A673 (cell line): ENCODE measurements at regions of chr11 and their contacts with region 1.

Region 1: DNA sequence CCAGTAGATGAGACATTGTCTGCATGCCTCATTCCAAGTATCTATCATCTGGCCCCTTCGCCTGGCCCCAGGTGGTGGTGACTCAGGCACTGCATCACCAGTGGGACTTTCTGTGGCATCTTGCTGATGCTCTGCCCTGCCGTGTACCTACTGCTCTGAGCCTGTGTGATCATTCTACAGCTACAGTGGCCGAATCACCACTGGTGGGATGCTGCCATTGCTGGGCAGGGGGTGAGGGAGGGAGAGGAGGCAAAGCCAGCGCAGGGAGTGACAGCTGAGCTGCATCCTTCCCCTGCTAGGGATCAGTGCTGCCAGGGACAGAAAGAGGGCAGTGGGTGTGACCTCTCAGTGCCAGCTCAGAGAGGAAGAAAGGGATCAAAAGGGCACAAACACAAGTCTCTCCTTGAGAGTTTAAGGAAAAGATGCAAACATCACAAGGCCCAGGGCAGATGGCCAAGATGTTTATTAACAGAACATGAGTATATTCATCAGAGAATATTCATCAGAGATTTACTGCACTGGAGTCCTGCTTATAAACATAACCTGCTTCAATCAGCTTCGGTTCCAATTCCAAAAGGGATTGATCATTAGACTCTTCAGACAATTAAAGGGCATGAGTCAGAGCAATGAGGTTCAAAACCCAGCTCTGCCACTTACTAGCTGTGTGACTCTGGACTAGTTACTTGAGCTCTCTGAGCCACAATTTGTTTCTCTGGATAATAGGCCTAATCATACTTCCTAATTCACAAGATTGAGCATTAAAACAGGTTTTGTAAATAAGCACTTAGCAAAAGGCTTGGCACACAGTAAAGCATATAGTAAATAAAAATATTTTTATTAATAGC is 109.8 kb downstream of the NAT10 start:
- DNase-seq: peak; percentile 46
- H3K4me3 ChIP-seq: no peak overlapping the region
- H3K27ac ChIP-seq: no peak overlapping the region
- H3K4me1 ChIP-seq: peaks cover 3% of the 10 kb centered on the region
- H3K27me3 ChIP-seq: no peaks in the 10 kb centered on the region
- CTCF ChIP-seq: no peak

Region 2: DNA sequence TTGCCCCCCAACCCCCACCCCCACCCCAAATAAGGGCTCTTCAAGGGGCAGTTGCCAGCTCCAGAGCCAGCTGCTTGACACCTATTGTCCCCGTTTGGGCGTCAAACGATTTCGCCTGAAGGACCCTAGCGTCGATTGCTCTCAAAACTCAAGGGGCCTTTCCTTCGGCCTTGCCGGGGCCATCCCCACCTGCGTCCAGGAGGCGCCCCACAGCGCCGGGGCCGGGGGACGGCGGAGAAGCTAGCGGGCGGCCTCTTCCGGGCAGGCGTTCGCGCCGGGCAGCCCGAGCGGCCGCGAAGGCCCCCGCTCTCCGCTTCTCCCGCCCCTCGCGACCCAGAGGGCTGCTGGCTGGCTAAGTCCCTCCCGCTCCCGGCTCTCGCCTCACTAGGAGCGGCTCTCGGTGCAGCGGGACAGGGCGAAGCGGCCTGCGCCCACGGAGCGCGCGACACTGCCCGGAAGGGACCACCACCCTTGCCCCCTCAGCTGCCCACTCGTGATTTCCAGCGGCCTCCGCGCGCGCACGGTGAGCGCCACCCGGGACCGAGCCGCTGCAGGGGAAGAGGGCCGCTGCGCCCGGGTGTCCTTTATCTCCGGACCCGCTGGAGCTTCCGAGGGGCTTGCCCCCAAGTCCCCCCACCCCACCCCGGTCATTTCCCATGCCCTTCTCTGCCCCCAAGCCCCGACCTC is 163.7 kb before region 1 on chr11 and contains the start of gene CAPRIN1:
- CTCF ChIA-PET with region 1: no interaction called
- POLR2A ChIA-PET with region 1: no interaction called
- intact Hi-C with region 1: no loop called
- DNase-seq: peak; percentile 99
- H3K4me3 ChIP-seq: peak within 1 kb of the TSS; percentile 71
- H3K27ac ChIP-seq: peak within 1 kb of the TSS; percentile 99
- H3K4me1 ChIP-seq: peaks cover 61% of the 10 kb centered on the region
- H3K27me3 ChIP-seq: no peaks in the 10 kb centered on the region
- CTCF ChIP-seq: no peak
- total RNA-seq, gene CAPRIN1: 1,416 and 1,470 TPM in 2 replicates

Region 3: GRCh38 chr11:34300026-34300925 is 85.1 kb after region 1 on chr11:
- CTCF ChIA-PET with region 1: no interaction called
- POLR2A ChIA-PET with region 1: interaction called, 15 read pairs
- intact Hi-C with region 1: no loop called
- DNase-seq: peak; percentile 50
- H3K4me3 ChIP-seq: no peak overlapping the region
- H3K27ac ChIP-seq: peak overlapping the region; percentile 34
- H3K4me1 ChIP-seq: peaks cover 36% of the 10 kb centered on the region
- H3K27me3 ChIP-seq: no peaks in the 10 kb centered on the region
- CTCF ChIP-seq: no peak

Region 4: DNA sequence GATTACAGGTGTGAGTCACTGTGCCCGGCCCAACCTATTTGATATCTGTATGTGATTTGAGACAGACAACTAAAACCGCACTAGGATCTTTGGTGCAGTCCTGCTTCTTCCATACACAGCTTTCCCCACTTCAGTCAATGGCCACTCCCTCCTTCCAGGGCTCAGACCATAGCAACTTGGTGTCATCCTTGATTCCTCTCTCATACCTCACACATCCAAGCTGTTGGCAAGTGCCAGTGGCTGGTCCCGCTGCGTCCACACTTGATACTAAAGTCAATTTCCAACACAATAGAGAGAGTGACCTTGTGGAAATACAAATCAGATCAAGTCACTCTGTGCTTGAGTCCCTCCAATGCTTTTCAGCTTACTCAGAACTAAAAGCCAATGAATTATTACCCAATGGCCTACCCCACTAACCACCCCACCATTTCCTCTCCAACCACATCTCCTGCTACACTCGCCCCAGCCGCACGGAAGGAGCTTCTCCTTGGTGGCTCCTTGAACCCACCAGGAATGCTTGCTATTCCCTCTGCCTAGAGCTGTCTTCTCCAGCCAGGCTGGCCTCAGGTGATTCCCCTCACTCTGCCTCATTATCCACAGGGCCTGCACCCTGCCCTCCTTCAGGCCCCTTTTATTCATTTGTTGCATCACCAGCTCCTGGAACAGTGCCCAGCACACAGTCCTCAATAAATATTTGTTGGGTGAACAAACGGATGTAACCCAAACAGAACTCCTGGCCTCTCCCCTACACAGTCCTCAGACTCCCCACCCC is 129.8 kb after region 1 on chr11:
- CTCF ChIA-PET with region 1: no interaction called
- POLR2A ChIA-PET with region 1: no interaction called
- intact Hi-C with region 1: no loop called
- DNase-seq: peak; percentile 46
- H3K4me3 ChIP-seq: no peak overlapping the region
- H3K27ac ChIP-seq: no peak overlapping the region
- H3K4me1 ChIP-seq: peaks cover 54% of the 10 kb centered on the region
- H3K27me3 ChIP-seq: no peaks in the 10 kb centered on the region
- CTCF ChIP-seq: no peak

Region 5: DNA sequence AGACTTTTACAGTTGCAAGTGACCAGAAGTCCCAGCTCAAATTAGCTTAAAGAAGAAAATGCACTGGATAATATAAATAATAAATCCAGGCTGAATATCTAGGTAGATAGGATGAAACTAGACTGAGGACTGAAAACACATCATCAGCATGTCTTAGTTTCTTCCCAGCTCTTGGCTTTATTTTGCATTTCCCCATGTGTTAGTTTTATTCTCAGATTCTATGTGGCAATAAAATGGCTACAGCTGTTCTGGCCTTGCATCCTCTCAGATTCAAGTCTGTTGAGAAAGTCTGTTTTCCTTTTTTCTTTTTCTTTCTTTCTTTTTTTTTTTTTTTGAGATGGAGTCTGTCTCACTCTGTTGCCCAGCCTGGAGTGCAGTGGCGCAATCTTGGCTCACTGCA is 200.9 kb after region 1 on chr11:
- CTCF ChIA-PET with region 1: interaction called, 16 read pairs
- POLR2A ChIA-PET with region 1: no interaction called
- intact Hi-C with region 1: no loop called
- DNase-seq: no peak
- H3K4me3 ChIP-seq: no peak overlapping the region
- H3K27ac ChIP-seq: no peak overlapping the region
- H3K4me1 ChIP-seq: no peaks in the 10 kb centered on the region
- H3K27me3 ChIP-seq: peaks cover 4% of the 10 kb centered on the region
- CTCF ChIP-seq: no peak